Activated CD4-positive, alpha-beta T cell treated with anti-CD3 and anti-CD28 coated beads for 36 hours (primary cell): ENCODE measurements at regions of chr19 and their contacts with region 1.

Region 1: DNA sequence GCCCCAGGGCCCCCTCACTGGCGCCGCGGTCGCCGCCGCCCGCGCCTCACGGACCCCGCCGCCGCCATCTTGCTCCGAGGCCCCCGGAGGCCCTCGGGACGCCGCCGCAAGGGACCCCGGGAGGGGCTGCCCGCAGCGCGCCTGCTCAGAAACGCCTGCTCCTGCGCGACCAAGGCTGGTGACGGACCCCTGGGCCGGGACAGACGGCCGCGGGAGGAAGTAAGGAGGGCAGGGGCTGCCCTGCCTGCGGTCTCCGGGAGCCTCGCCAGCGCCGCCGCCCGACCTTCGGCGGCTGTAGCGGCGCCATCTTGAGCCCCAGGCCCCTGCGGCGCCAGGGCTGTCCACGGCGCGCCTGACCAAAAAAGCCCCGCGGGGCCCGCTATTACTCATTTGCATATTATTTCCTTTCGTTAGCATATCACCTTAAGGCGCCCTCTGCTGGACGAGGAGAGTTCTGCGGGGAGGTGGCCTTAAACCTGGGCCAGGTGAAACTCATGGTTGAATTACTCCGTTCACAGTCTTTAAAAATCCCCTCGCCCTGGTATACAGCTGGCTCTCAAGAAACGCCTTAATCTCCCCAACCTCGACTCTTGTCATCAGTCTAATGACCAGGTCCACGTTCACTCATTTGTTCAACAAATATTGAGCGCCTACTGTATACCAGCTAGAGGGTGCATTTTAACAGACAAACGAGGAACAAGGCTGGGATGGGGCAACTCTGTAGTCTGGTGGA is at the start of gene REXO1:
- DNase-seq: peak; percentile 98
- ATAC-seq: peak; percentile 72
- H3K4me3 Mint-ChIP-seq: peak within 1 kb of the TSS; percentile 92
- H3K27ac Mint-ChIP-seq: peak within 1 kb of the TSS; percentile 88
- H3K4me1 Mint-ChIP-seq: peaks cover 65% of the 10 kb centered on the region
- H3K27me3 Mint-ChIP-seq: no peaks in the 10 kb centered on the region
- total RNA-seq, gene REXO1: 39.3 to 49.8 TPM

Region 2: DNA sequence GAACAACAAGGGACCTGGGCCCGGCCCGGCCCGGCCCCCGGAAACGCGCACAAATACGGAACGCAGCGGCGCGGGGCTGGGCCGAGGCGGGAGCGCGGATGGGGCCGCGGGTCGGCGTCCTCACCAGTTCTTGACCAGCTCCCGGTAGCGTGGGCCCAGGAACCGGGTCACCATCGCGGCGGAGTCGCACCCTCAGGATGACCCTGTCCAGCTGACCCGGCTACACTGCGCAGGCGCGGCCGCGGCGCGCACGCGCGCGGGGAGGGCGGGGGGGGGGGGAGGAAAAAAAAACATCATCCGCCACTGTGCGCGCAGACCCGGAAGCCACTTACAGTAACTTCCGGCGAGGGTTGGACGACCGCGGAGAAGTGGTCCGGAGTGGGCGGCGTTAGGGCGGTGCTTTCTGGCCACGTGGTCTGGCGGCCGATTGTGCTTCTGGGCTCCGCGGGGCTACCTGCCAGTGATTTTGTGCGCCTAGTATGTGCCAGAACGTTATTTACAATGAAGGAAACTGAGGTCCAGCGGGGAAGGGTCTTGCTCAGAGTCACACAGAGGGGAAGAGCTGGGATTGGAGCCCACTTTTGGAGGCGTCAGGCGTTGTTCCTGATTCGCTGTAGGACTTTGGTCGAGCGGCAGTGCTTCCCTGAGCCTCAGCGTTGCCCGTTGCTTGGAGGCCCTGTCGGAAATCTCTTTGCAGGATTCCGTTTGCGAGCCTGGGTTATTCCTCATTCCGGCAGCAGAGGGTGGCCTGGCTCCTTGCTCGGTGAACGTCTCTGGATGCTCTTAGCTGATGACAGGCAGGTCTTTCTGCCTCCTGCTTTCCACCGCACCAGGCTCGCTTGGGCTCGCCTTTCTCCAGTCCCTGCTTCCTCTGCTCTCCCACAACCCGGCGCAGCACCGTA is 243.1 kb before region 1 on chr19 and contains the start of gene UQCR11:
- CTCF ChIA-PET with region 1: no interaction called
- POLR2A ChIA-PET with region 1: no interaction called
- intact Hi-C with region 1: loop called in 1 of 2 experiments (anchors 1 kb)
- DNase-seq: peak; percentile 96
- ATAC-seq: peak; percentile 89
- H3K4me3 Mint-ChIP-seq: peak within 1 kb of the TSS; percentile 97
- H3K27ac Mint-ChIP-seq: peak within 1 kb of the TSS; percentile 99
- H3K4me1 Mint-ChIP-seq: peaks cover 52% of the 10 kb centered on the region
- H3K27me3 Mint-ChIP-seq: no peaks in the 10 kb centered on the region
- total RNA-seq, gene UQCR11: 152 to 226 TPM

Region 3: GRCh38 chr19:1680976-1681375 is 167.6 kb before region 1 on chr19:
- CTCF ChIA-PET with region 1: no interaction called
- POLR2A ChIA-PET with region 1: no interaction called
- intact Hi-C with region 1: no loop called
- DNase-seq: no peak
- ATAC-seq: no peak
- H3K4me3 Mint-ChIP-seq: no peak overlapping the region
- H3K27ac Mint-ChIP-seq: no peak overlapping the region
- H3K4me1 Mint-ChIP-seq: no peaks in the 10 kb centered on the region
- H3K27me3 Mint-ChIP-seq: peaks cover 28% of the 10 kb centered on the region

Region 4: GRCh38 chr19:1942078-1942933 is 93.7 kb after region 1 on chr19:
- CTCF ChIA-PET with region 1: no interaction called
- POLR2A ChIA-PET with region 1: no interaction called
- intact Hi-C with region 1: loop called in 1 of 2 experiments (anchors 1 kb)
- DNase-seq: peak; percentile 85
- ATAC-seq: peak; percentile 50
- H3K4me3 Mint-ChIP-seq: peak overlapping the region; percentile 93
- H3K27ac Mint-ChIP-seq: peak overlapping the region; percentile 88
- H3K4me1 Mint-ChIP-seq: peaks cover 30% of the 10 kb centered on the region
- H3K27me3 Mint-ChIP-seq: no peaks in the 10 kb centered on the region

Region 5: DNA sequence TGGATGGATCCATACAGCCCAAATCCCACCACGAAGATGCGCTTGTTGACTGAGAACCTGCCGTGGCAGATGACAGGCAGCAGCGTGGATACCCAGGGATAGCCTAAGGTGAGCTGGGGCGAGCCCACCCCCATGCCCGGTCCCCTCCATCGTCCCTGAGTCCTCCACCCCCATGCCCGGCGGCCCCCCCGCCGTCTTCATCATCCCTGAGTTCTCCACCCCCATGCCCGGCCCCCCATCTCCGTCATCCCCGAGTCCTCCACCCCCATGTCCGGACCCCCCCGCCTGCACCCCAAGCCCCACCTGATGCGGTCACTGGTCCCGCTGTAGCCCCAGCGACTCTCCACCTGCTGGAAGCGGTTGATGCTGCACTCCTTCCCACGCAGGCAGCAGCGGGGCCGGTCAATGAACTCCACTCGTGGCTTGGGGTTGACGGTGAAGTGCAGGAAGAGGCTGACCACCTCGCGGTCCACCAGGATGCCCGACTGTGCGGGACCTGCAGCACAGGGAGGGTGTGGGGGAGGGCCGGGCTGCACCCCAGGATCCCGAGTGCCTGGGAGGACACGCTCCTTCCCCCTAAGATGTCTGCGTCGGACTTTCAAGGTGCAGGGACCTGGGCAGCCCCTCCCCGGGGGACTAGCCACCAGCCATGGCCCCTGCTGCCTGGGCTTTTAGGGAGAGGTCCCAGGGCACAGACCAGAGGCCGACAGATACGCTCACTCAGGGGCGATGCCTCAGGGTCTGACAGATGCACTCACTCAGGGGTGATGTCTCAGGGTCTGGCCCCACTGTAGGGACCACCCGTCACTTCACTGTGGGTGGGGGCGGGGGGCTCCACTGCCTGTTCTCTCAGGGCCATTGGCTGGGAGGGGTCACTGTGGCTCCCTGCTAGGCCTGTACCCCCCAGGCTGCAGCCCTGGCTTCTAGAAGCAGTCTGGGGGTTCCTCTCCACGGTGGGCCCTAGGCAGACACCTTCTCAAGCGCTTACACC is 138.9 kb after region 1 on chr19:
- CTCF ChIA-PET with region 1: no interaction called
- POLR2A ChIA-PET with region 1: no interaction called
- intact Hi-C with region 1: no loop called
- DNase-seq: no peak
- ATAC-seq: peak; percentile 12
- H3K4me3 Mint-ChIP-seq: no peak overlapping the region
- H3K27ac Mint-ChIP-seq: no peak overlapping the region
- H3K4me1 Mint-ChIP-seq: no peaks in the 10 kb centered on the region
- H3K27me3 Mint-ChIP-seq: no peaks in the 10 kb centered on the region